ENCODE measurements at regions of chr17 and their contacts with region 1.

Region 1: DNA sequence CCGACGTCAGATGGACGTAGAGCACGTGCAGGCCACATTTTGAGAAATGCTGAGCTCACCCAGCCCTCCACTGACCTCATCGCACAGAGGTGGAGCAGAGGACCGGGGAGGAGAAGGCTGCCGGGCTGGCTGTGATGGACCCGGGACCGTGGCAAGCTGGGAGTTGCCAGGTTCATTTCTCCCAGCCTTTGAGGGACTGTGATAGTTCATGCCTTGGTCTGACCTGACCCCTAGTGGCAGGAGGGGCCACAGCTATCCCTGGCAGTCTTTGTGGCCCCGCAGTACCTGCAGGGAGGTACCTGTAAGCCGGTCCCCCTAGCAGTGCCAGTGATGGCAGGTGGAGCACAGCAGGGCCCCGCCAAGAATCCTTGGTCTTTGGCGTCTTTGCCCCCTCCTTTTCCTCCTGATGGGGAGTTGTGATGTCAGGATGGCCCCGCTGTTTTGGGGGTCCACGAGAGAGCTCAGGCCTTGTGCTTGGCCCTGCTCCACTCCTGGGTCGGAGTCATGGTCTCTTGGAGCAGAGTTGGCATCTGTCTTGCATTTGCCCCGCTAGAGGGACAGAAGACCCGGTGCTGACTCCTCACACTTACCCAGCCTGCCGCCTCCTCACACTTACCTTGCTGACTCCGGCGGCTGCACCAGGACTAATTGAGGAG is 50.4 kb downstream of the OR1D5 start:
- DNase-seq: no peak
- H3K4me3 ChIP-seq: no peak overlapping the region
- H3K27ac ChIP-seq: no peak overlapping the region
- H3K4me1 ChIP-seq: peaks cover 0 to 7% (median 0%) of the 10 kb centered on the region in 4 donors
- H3K27me3 ChIP-seq: no peaks in the 10 kb centered on the region
- CTCF ChIP-seq: peak; percentile 73 to 85 (median 79)
- EP300 ChIP-seq: no peak
- POLR2A ChIP-seq: no peak

Region 2: GRCh38 chr17:2634361-2634960 is 378.6 kb before region 1 on chr17:
- intact Hi-C with region 1: no loop called
- DNase-seq: no peak
- H3K4me3 ChIP-seq: no peak overlapping the region
- H3K27ac ChIP-seq: peak overlapping the region in 1 of 4 donors; percentile 18
- H3K4me1 ChIP-seq: peaks cover 31 to 70% (median 65%) of the 10 kb centered on the region in 4 donors
- H3K27me3 ChIP-seq: no peaks in the 10 kb centered on the region
- CTCF ChIP-seq: no peak
- EP300 ChIP-seq: no peak
- POLR2A ChIP-seq: no peak

Region 3: GRCh38 chr17:2828397-2829038 is 184.5 kb before region 1 on chr17:
- intact Hi-C with region 1: loop called (anchors 2 kb)
- DNase-seq: no peak
- H3K4me3 ChIP-seq: no peak overlapping the region
- H3K27ac ChIP-seq: no peak overlapping the region
- H3K4me1 ChIP-seq: peaks cover 0 to 4% (median 4%) of the 10 kb centered on the region in 4 donors
- H3K27me3 ChIP-seq: peaks cover 0 to 27% (median 0%) of the 10 kb centered on the region in 4 donors
- CTCF ChIP-seq: peak; percentile 69 to 93 (median 80)
- EP300 ChIP-seq: no peak
- POLR2A ChIP-seq: no peak

Region 4: GRCh38 chr17:2849327-2849670 is 163.8 kb before region 1 on chr17:
- intact Hi-C with region 1: loop called (anchors 1 kb)
- DNase-seq: no peak
- H3K4me3 ChIP-seq: no peak overlapping the region
- H3K27ac ChIP-seq: peak overlapping the region in 1 of 4 donors; percentile 44
- H3K4me1 ChIP-seq: peaks cover 12 to 34% (median 26%) of the 10 kb centered on the region in 4 donors
- H3K27me3 ChIP-seq: peaks cover 0 to 6% (median 0%) of the 10 kb centered on the region in 4 donors
- CTCF ChIP-seq: no peak
- EP300 ChIP-seq: no peak
- POLR2A ChIP-seq: no peak

Measured in esophagus muscularis mucosa (tissue), 4 donors.